MCF 10A (cell line): ENCODE measurements at regions of chr10 and their contacts with region 1.

Region 1: DNA sequence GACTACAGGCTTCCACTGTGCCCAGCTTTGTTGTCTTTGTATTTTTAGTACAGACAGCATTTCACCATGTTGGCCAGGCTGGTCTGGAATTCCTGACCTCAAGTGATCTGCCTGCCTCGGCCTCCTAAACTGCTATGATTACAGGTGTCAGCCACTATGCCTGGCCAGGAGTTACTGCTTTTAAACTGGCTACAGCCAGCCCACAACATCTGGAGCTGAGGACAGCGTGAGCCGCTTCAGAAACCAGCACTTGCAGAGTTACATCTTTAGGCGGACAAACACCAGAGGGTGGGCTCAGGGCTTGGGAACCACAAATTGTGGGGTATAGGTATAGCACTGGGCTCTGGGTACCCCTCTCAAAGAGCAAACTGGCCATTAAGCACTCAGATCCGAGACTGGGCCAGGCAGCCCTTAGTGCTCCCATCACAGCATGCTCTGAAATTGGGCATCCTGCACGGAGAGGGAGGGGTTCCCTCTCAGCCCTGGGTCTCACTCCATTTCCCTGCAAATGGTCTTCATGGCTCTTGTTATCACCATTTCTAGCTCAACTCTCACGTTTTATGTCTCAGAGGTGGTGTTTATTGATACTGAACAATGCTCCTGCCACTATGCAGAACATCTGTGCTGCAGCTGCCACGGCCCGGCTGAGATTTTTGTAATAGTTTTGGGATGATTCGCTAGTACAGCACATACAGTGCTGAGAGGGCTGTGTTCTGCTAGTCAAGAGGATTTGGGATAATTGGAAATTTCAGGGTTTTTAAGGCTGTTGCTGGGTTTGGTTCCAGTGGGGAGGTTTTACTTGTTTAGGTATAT is 146.4 kb upstream of the LYZL2 start:
- DNase-seq: peak; percentile 23
- H3K4me3 Mint-ChIP-seq: no peak overlapping the region
- H3K27ac Mint-ChIP-seq: no peak overlapping the region
- H3K4me1 Mint-ChIP-seq: peaks cover 9% of the 10 kb centered on the region
- H3K27me3 Mint-ChIP-seq: no peaks in the 10 kb centered on the region
- CTCF ChIP-seq: no peak

Region 2: DNA sequence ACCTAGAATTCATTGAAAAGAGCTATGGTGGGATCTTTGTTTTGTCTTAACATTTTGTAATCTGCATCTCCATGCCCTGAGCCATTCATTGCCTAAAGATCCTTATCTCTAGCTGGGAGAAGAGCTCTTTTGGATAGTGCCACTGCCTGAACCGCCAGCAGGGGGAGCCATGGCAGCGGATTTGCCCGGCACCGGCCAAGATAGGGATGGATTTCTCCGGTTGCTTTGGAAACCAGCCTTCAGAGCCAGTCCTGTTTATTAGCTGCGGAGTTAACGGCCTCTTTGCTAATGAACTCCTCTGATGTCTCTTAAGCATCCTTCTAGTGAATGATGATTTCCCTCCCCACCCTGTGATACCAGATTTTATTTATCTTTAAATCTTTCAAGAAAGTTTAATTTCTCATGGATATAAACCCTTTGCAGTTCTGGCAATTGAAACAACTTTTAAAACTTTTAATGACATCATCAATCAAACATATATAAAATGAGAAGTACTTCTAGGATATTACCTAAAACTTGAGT is 88.2 kb before region 1 on chr10:
- CTCF ChIA-PET with region 1: no interaction called
- POLR2A ChIA-PET with region 1: no interaction called
- intact Hi-C with region 1: loop called (anchors 1 kb)
- DNase-seq: peak; percentile 78
- H3K4me3 Mint-ChIP-seq: no peak overlapping the region
- H3K27ac Mint-ChIP-seq: no peak overlapping the region
- H3K4me1 Mint-ChIP-seq: no peaks in the 10 kb centered on the region
- H3K27me3 Mint-ChIP-seq: no peaks in the 10 kb centered on the region
- CTCF ChIP-seq: peak; percentile 86

Region 3: DNA sequence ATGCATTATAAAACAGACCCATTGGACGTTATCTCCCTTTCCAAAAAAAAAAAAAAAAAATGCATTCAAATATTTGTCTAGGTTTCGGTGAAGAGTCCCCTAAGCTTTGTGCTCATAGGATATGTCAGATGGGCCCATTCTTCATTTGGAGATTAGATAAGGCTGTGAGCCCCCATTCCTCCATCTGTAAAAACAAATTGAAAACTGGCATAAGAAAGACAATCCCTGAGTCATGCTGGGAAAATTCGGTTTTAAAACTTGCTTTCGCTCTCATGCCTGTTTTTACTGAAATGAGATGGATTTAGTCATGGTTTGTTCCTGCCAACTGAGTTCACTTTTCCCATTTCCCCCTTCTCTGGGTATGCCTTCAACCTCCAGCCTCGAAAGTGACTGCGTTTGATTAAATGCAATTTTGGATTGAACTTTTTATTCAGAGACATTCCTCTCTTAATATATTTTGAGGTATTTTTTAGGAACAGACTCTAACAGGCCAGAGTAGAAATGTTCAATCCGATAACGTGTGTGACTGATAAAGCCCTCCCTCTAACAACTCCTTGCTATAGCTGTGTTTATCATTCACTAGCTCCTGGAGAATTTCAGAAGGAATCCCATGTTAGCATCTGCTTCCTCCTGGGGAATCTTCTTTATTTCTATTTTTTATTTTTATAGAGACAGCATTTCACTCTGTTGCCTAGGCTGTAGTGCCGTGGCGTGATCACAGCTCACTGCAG is 44.4 kb after region 1 on chr10:
- CTCF ChIA-PET with region 1: no interaction called
- POLR2A ChIA-PET with region 1: no interaction called
- intact Hi-C with region 1: no loop called
- DNase-seq: peak; percentile 7
- H3K4me3 Mint-ChIP-seq: no peak overlapping the region
- H3K27ac Mint-ChIP-seq: no peak overlapping the region
- H3K4me1 Mint-ChIP-seq: no peaks in the 10 kb centered on the region
- H3K27me3 Mint-ChIP-seq: no peaks in the 10 kb centered on the region
- CTCF ChIP-seq: no peak